GM10248 (cell line): ENCODE measurements at regions of chr17 and their contacts with region 1.

Region 1: DNA sequence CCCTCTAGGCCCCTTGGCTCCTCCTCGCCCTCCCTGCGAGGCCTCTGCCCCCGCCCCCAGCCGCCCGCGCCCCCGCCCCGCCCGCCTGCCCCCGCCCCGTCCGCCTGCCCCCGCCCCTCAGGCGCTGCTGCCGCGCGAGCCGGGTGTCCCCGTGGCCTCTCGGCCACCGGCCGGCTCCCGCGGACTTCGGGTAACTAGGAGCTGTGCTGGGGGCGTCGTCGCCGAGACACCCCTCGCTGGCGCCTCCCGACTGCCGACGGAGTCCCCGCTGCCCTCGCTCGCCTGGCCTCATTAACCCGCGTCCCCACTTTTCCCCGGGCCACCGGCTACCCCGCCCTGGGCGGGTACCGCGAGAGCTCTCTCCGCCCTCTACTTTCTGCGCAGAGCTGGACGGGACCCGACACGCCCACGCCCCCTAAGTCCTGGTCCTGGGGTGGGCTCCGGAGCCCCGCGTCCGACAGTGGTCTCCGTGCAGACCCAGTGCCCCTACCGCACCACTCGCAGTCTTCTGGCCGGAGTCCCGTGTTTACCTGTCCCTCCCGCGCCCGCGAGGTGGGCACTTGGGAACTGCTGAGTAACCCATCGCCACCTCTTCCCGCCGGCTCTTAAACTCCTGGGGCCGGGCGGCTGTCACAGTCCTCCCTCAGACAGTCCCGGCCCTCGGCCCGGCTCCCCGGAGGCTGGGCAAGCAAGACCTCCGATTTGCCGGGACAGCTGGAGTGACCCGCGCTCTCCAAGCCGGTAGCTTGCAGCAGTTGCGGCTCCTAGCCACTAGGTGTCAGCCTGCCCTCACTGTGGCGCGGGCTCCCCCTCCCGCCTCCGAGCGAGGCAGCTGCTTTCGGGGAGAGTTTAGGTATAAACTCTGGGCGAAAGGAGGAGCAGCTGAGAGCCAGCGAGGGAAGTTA is at the start of gene TLCD1:
- DNase-seq: peak; percentile 82
- CTCF ChIP-seq: peak; percentile 97

Region 2: DNA sequence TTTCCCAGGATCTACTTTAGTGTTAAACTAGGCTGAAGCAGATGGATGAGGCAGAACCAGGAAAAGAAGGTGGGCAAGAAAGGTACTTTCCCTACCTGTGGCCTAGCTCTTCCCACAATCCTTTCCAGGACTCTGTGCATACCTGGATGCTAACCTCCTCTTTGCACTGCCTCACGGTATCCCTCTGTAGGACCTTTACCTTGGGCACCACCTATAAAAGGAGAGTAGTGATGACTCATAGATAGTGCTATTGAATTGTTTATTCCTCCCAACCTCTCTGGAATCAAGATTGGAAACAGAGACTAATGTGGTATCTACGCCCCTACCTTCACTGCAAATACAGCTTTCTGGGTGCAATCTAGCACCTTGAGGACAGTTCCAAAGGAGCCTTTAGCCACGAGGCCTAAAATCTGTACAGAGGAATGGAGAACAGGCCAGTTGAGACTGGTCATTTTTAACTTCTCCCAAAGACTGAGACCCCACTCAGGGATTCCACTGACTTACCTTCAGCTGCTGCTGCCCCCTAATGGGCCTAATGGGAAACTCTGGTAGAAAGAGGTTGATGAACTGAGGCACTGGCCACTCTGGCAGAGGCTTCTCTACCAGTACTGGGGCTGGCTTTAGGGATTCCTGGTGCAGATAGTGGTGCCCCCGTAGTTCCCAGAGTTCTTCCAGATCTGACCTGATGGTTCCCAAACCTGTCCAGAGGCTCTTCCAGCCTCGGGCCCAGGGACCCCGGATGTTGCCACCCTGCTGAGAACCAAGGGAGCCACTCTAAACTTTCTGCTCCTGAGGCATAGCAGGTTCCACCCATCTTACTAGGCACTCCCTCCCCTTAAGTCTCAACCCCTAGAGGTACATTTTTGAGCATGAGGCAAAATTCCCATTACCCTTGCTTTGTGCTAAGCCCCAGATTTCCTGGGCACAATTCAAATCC is 113.3 kb before region 1 on chr17:
- CTCF ChIA-PET with region 1: no interaction called
- POLR2A ChIA-PET with region 1: no interaction called
- DNase-seq: peak; percentile 39
- CTCF ChIP-seq: peak; percentile 70

Region 3: DNA sequence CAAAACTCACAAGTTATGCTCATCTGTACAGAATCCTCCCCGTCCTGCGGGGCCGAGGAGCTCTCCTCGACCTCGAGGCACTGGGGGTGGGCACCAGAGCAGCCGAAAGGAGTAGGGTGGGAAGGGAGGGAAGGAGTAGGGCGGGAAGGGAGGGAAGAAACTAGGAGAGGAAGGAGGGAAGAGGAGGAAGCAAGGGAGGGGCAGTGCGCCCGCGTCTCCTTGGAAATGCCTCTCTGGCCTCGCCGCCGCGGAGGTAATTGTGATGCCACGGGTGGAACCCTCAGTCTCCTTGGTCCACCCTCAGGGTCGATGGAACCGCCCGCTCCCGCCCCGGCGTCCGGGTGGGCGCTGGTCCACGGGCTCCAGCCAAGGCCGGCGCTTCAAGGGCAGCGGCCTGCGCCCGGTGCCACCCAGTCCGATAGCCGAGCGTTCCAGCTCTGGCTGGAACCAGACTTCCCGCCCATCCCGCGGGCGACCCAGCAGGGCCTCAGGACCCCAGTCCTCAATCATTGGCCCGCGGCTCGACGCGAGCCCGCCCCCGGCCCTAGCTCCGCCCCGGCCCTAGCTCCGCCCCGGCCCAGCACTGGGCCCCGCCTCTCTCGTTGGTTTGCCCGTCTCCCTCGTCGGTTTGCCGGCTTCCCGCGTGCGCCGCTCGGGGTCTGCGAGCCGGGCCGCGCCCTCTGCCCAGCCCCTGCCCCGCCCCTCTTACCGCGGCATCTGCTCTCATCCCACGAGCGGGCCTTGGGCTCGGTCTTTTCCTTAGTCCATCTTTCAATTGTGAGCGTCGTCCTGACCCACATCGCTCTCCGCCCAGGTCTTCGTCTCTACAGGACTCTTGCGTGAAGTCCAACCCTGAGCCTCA is 15.4 kb before region 1 on chr17:
- CTCF ChIA-PET with region 1: interaction called, 25 read pairs
- POLR2A ChIA-PET with region 1: interaction called, 9 read pairs
- DNase-seq: peak; percentile 95
- CTCF ChIP-seq: no peak

Region 4: GRCh38 chr17:28763804-28764266 is 37.4 kb after region 1 on chr17:
- CTCF ChIA-PET with region 1: interaction called, 68 read pairs
- POLR2A ChIA-PET with region 1: interaction called, 16 read pairs
- DNase-seq: peak; percentile 71
- CTCF ChIP-seq: peak; percentile 77

Region 5: DNA sequence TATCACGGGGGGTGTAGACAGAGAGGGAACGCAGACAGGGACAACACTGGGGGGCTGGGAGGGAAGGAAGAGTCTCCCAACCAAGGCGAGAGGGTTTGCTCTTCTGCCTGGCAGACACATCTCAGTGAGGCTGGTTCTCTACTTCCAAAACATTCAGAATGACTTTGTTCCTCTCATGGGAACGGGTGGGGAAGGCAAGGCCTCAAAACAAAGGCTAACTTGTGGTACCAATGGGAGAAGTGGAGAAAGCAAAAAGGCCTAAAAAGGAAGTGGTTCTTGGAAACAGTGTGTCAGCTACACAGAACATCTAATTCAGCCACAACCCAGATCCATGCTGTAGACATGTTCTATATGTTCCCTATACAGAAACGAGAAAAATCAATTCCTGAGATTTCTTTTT is 163.5 kb after region 1 on chr17:
- CTCF ChIA-PET with region 1: interaction called, 11 read pairs
- POLR2A ChIA-PET with region 1: interaction called, 7 read pairs
- DNase-seq: no peak
- CTCF ChIP-seq: no peak

Region 6: GRCh38 chr17:28916302-28916934 is 189.9 kb after region 1 on chr17:
- CTCF ChIA-PET with region 1: interaction called, 21 read pairs
- POLR2A ChIA-PET with region 1: no interaction called
- DNase-seq: no peak
- CTCF ChIP-seq: peak; percentile 68

Region 7: GRCh38 chr17:29116804-29117772 is 390.6 kb after region 1 on chr17:
- CTCF ChIA-PET with region 1: interaction called, 20 read pairs
- POLR2A ChIA-PET with region 1: no interaction called
- DNase-seq: peak; percentile 83
- CTCF ChIP-seq: peak; percentile 98